ENCODE measurements at regions of chr12 and their contacts with region 1.

Region 1: DNA sequence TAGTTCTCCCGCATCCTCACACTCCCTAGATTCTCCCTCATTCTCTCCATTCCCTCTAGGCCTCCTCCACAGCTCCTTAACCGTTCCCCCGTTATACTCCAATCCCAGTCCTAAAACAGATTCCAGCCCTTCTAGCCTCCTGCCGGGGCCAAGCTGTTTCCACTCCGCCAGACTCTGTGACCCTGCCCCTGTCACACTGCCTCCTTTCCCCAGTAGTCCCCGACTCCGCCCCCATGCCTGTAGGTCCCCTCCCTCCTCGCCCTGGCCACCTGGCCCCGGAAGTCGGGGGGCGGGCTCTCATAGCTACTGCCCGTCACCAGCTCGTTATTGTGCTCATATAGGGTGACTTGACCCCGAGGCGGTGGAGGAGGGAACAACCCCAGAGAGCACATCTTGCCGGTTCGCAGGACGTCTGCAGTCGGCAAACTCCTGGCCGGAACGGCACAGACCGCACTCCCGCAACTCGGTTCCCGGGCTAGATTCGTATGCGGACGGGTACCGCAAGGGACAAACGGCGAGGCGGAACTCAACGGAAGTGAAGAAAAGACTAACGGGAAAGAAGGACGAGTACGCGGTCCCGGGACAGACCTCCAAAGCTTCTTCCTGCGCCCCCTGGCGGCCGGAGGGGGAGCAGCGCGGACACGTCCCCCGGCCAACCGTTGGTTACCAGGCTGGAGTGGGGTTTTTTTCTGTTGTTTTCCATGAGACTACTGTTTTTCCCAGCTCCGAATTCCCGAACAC is at the start of gene AAAS:
- DNase-seq: peak; percentile 97
- H3K4me3 Mint-ChIP-seq: peak within 1 kb of the TSS; percentile 90
- H3K27ac Mint-ChIP-seq: peak within 1 kb of the TSS; percentile 95
- H3K4me1 Mint-ChIP-seq: peaks cover 46% of the 10 kb centered on the region
- H3K27me3 Mint-ChIP-seq: no peaks in the 10 kb centered on the region
- total RNA-seq, gene AAAS: 63.2 to 63.8 TPM

Region 2: DNA sequence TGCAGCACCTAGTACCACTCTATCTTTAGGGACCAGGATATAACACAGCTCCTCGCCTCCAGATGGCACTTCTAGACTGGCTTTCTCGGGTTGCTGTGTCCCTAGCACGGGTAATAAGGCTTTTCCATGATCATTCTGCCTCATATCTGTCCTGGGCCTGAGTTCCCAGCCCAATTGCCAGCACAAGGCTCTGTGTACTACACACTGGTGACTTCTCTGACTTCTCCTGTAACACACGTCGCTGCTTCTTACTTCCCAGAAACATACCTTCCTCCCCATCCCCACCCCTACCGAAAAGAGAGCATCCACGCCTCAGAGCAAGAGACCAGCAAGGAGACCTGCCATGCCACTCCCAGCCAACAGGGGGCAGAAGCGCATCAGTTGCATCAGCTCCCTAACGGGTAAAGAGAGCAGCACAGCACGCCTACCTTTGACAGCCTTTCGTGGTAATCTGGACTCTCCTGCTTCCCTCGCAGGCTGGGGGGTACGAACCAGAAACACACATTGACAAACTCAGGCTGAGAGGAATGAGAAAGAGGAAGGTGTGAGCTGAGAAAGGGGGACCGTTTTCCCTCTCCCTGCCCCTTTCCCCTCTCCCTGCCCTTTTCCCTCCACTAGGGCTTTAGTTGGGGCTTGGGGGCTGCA is 161.9 kb before region 1 on chr12:
- CTCF ChIA-PET with region 1: interaction called, 41 read pairs
- POLR2A ChIA-PET with region 1: interaction called, 13 read pairs
- DNase-seq: peak; percentile 93
- H3K4me3 Mint-ChIP-seq: no peak overlapping the region
- H3K27ac Mint-ChIP-seq: peak overlapping the region; percentile 21
- H3K4me1 Mint-ChIP-seq: peaks cover 12% of the 10 kb centered on the region
- H3K27me3 Mint-ChIP-seq: no peaks in the 10 kb centered on the region

Region 3: GRCh38 chr12:53213348-53213747 is 107.9 kb before region 1 on chr12:
- CTCF ChIA-PET with region 1: interaction called, 144 read pairs
- POLR2A ChIA-PET with region 1: interaction called, 19 read pairs
- DNase-seq: peak; percentile 84
- H3K4me3 Mint-ChIP-seq: no peak overlapping the region
- H3K27ac Mint-ChIP-seq: peak overlapping the region; percentile 55
- H3K4me1 Mint-ChIP-seq: peaks cover 91% of the 10 kb centered on the region
- H3K27me3 Mint-ChIP-seq: no peaks in the 10 kb centered on the region

Region 4: GRCh38 chr12:53287741-53288216 is 33.5 kb before region 1 on chr12:
- CTCF ChIA-PET with region 1: interaction called, 14 read pairs
- POLR2A ChIA-PET with region 1: no interaction called
- DNase-seq: peak; percentile 76
- H3K4me3 Mint-ChIP-seq: no peak overlapping the region
- H3K27ac Mint-ChIP-seq: peak overlapping the region; percentile 45
- H3K4me1 Mint-ChIP-seq: peaks cover 12% of the 10 kb centered on the region
- H3K27me3 Mint-ChIP-seq: no peaks in the 10 kb centered on the region

Region 5: GRCh38 chr12:53336181-53336681 is 15.0 kb after region 1 on chr12 and contains the start of gene SP7:
- CTCF ChIA-PET with region 1: interaction called, 7 read pairs
- POLR2A ChIA-PET with region 1: interaction called, 13 read pairs
- DNase-seq: no peak
- H3K4me3 Mint-ChIP-seq: no peak within 1 kb of the TSS
- H3K27ac Mint-ChIP-seq: no peak within 1 kb of the TSS
- H3K4me1 Mint-ChIP-seq: peaks cover 13% of the 10 kb centered on the region
- H3K27me3 Mint-ChIP-seq: peaks cover 65% of the 10 kb centered on the region
- total RNA-seq, gene SP7: not detected

Region 6: GRCh38 chr12:53379389-53380103 is 58.3 kb after region 1 on chr12:
- CTCF ChIA-PET with region 1: interaction called, 27 read pairs
- POLR2A ChIA-PET with region 1: interaction called, 23 read pairs
- DNase-seq: peak; percentile 99
- H3K4me3 Mint-ChIP-seq: no peak overlapping the region
- H3K27ac Mint-ChIP-seq: no peak overlapping the region
- H3K4me1 Mint-ChIP-seq: peaks cover 40% of the 10 kb centered on the region
- H3K27me3 Mint-ChIP-seq: no peaks in the 10 kb centered on the region

Region 7: DNA sequence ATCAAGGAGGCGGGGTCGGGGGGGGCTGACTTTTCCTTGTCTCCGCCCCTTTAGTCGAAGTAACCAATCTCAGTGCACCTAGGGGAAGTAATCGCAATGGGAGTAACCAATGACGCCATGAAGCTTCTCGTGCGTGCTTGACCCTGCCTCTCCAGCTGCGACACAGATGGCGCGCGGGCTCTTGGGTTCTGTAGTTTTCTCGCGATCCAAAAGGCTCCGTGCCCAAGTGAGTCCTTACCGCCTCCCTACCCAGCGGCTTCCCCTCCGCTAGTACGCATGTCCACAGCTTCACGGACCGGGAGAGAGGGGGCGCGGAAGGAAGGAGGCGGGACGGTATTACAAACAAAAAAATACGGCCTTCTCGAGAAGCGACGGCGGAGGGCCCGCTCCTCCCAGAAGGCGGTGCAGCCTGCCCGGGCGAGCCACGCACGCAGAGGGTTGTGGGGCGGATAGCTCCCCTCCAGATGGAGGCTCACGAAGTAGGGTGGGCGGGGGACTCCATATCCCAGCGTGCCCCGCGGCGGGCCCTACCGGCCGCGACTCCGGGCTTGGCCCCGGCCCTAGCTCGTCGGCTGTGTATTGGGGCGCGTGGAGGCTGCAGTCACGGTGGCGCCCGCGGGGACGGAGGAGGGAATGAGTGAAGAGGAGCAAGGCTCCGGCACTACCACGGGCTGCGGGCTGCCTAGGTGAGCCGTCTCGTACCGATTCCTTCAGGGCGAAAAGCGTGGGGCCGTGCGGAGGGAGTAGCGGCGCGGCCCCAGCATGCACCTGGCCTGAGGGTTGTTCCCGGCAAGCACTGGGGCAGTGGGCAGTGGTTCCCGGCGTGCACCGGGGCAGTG is 179.8 kb after region 1 on chr12 and contains the start of gene TARBP2:
- CTCF ChIA-PET with region 1: interaction called, 29 read pairs
- POLR2A ChIA-PET with region 1: interaction called, 16 read pairs
- DNase-seq: peak; percentile 96
- H3K4me3 Mint-ChIP-seq: peak within 1 kb of the TSS; percentile 80
- H3K27ac Mint-ChIP-seq: peak within 1 kb of the TSS; percentile 97
- H3K4me1 Mint-ChIP-seq: peaks cover 47% of the 10 kb centered on the region
- H3K27me3 Mint-ChIP-seq: no peaks in the 10 kb centered on the region
- total RNA-seq, gene TARBP2: 24.5 to 28.0 TPM

Region 8: DNA sequence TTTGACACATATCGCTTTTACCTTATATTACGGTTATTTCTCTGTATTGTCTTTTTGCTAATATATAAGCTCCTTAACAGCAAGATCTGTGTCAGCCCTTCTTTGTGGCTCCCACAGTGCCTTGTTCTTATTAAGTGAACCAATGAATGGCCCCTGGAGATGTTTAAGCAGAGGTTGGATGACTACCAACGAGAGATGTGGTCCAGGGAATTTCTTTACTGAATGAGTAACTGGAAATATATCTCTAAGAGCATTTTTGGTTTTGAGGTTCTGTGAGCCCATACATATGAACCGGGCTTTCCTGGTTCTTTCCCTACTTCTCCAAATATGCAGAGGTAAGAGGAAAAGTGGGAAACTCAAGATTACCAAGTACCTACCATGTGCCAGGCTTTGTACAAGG is 382.5 kb after region 1 on chr12:
- CTCF ChIA-PET with region 1: no interaction called
- POLR2A ChIA-PET with region 1: no interaction called
- DNase-seq: no peak
- H3K4me3 Mint-ChIP-seq: no peak overlapping the region
- H3K27ac Mint-ChIP-seq: no peak overlapping the region
- H3K4me1 Mint-ChIP-seq: no peaks in the 10 kb centered on the region
- H3K27me3 Mint-ChIP-seq: peaks cover 80% of the 10 kb centered on the region